AG04449 (cell line): ENCODE measurements at regions of chr22 and their contacts with region 1.

Region 1: DNA sequence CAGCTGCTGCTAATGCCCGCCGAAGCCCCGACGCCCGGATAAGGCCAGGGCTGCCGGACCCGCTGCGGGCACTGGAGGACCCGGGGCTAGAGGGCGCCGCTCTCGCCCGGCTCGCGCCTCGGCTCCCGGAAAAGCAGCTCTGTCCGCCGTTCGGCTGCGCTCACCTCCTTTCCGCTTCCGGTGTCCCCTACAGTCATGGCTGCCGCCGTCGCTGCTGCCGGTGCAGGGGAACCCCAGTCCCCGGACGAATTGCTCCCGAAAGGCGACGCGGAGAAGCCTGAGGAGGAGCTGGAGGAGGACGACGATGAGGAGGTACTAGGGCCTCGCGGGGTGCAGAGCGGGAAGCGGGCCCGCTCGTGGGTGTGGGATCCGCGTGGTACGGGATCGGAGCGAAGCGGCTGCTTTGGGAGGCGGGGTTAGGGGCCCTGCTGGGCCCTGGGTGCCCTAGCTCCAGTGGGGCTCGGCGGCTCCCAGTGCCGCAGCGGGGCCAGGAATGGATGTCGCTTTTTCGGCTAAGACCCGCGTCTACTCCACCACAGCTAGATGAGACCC is at the start of gene TOMM22:
- DNase-seq: no peak
- H3K4me3 ChIP-seq: peak within 1 kb of the TSS; percentile 96
- CTCF ChIP-seq: peak; percentile 91

Region 2: DNA sequence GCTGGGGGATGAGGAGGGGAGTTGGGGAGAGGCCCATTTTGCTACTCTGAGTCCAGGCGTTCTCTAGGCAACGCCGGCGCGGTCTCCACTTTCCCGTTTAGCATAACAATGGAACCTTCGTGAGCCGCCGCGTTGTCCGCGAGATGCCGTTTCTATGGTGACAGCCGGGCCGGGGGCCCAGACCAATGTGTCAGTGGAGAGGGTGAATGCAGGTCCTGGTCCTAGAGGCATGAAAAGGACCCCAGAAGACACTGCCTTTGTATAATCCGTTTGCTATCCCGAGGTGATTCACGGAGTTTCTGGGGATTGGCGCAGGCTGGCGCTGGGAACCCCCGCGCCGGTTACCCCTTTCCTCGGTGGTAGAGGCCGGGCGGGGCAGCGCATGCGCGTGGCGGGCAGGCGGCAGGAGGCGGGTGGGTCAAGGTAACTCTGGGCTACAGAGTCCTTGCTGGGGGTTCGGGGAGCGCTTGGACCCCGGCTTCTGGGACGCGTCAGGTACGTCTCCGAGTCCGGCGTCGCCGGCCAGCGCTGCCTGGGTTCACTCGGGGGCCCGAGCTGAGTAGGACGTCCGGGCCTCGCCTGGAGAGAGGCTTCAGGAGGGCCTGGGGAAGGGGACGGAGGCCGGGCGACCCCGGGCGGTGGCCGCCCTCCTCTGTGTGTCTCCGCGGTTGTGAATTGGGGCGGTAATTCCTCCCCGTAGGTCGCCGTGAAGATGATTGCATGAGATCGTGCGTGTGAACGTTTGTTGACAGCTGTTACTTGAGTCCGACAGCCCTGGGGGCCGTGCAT is 25.4 kb before region 1 on chr22 and contains the starts of genes CBY1 and FAM227A:
- CTCF ChIA-PET with region 1: interaction called, 12 read pairs
- POLR2A ChIA-PET with region 1: no interaction called
- DNase-seq: no peak
- H3K4me3 ChIP-seq: peak within 1 kb of the TSS; percentile 87
- CTCF ChIP-seq: no peak

Region 3: DNA sequence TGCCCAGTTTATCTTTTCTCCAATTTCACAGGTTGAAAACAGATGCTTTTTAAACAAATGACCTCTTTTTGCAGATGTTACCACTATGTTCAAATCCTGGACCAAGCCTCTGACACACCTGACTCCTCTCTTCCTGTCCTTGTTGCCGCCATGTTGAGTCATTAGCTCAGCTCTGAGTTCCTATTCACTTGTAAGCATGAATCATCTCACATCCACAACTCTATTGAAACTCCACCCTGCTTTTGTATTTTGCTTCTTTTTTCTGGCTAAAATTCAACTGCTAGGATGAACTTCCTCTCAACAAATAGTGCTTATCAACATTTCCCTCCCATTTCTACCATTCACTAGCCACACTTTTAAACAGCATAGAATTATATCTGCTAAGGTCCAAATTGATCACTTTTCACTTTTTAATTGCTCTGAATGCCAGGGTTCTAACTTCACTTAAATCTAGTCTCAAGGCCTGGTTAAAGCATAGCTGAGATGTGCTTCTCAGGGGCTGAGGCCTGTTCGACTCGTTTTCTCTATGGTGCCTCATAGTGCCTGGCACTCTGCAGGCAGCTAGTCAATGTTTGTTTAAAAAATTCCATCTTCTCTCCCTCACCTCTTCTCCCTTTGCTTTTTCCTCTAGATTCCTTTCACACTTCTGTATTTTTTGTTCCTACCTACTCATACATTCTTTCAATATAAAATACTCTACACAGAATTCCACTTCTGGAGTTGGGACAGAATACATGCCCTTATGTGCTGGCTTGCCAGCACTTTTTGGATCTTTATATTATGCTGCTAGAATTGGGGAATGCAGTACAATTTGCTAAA is 15.0 kb after region 1 on chr22:
- CTCF ChIA-PET with region 1: interaction called, 61 read pairs
- POLR2A ChIA-PET with region 1: interaction called, 10 read pairs
- DNase-seq: no peak
- H3K4me3 ChIP-seq: peak overlapping the region; percentile 25
- CTCF ChIP-seq: no peak

Region 4: GRCh38 chr22:38705235-38706100 is 23.6 kb after region 1 on chr22 and contains the start of gene GTPBP1:
- CTCF ChIA-PET with region 1: interaction called, 45 read pairs
- POLR2A ChIA-PET with region 1: interaction called, 9 read pairs
- DNase-seq: peak; percentile 100
- H3K4me3 ChIP-seq: peak within 1 kb of the TSS; percentile 88
- CTCF ChIP-seq: no peak